Calu3 (cell line): ENCODE measurements at regions of chr13 and their contacts with region 1.

Region 1: DNA sequence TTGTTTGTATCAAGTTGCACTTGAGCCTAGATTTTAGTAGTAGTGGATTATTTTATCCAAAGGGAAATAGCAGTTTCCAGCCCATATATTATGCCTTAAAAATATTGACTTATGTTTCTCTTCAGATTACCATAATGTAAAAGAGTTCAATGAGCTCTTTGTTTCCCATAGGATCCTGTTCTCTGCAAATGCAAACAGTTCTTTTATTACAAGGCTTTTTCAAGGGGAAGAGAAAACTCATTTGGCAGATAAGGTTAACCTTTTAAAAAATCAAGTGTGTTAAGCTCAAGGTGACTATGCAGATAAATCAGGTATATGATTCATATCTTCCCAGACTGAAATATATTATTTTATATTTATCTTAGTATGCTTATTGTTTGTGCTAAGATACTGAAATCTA is 961.2 kb upstream of the SPRY2 start:
- DNase-seq: no peak
- H3K4me3 Mint-ChIP-seq: no peak overlapping the region
- H3K27ac Mint-ChIP-seq: no peak overlapping the region
- H3K4me1 Mint-ChIP-seq: no peaks in the 10 kb centered on the region
- H3K27me3 Mint-ChIP-seq: no peaks in the 10 kb centered on the region
- CTCF ChIP-seq: no peak

Region 2: GRCh38 chr13:79458436-79458835 is 1843.7 kb before region 1 on chr13:
- CTCF ChIA-PET with region 1: interaction called, 10 read pairs
- intact Hi-C with region 1: no loop called
- DNase-seq: no peak
- H3K4me3 Mint-ChIP-seq: no peak overlapping the region
- H3K27ac Mint-ChIP-seq: no peak overlapping the region
- H3K4me1 Mint-ChIP-seq: no peaks in the 10 kb centered on the region
- H3K27me3 Mint-ChIP-seq: no peaks in the 10 kb centered on the region
- CTCF ChIP-seq: no peak

Region 3: DNA sequence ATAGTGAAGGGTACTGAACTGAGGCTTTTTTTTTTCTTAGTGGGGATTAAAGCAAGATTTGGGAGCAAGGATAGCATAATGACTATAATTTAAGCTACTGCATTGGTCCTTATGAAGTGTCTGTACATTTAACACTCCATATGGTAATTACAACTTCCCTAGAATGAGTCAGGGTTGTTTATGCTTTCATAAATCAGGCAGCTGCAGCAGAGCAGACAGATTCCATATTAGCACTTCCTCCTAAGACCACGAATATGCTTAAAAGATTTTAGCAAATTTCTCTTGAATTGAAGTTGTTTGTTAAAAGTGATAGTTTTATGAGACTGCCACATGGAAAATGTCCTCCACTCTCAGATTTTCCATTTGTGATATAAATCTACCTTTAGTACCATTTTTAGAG is 560.1 kb before region 1 on chr13:
- CTCF ChIA-PET with region 1: no interaction called
- intact Hi-C with region 1: no loop called
- DNase-seq: no peak
- H3K4me3 Mint-ChIP-seq: no peak overlapping the region
- H3K27ac Mint-ChIP-seq: no peak overlapping the region
- H3K4me1 Mint-ChIP-seq: no peaks in the 10 kb centered on the region
- H3K27me3 Mint-ChIP-seq: no peaks in the 10 kb centered on the region
- CTCF ChIP-seq: no peak

Region 4: GRCh38 chr13:81350056-81350455 is 47.9 kb after region 1 on chr13:
- CTCF ChIA-PET with region 1: no interaction called
- intact Hi-C with region 1: no loop called
- DNase-seq: no peak
- H3K4me3 Mint-ChIP-seq: no peak overlapping the region
- H3K27ac Mint-ChIP-seq: no peak overlapping the region
- H3K4me1 Mint-ChIP-seq: no peaks in the 10 kb centered on the region
- H3K27me3 Mint-ChIP-seq: no peaks in the 10 kb centered on the region
- CTCF ChIP-seq: no peak

Region 5: GRCh38 chr13:81473366-81473899 is 171.3 kb after region 1 on chr13:
- CTCF ChIA-PET with region 1: no interaction called
- intact Hi-C with region 1: no loop called
- DNase-seq: no peak
- H3K4me3 Mint-ChIP-seq: no peak overlapping the region
- H3K27ac Mint-ChIP-seq: no peak overlapping the region
- H3K4me1 Mint-ChIP-seq: no peaks in the 10 kb centered on the region
- H3K27me3 Mint-ChIP-seq: no peaks in the 10 kb centered on the region
- CTCF ChIP-seq: no peak